Calu3 (cell line): ENCODE measurements at regions of chr12 and their contacts with region 1.

Region 1: DNA sequence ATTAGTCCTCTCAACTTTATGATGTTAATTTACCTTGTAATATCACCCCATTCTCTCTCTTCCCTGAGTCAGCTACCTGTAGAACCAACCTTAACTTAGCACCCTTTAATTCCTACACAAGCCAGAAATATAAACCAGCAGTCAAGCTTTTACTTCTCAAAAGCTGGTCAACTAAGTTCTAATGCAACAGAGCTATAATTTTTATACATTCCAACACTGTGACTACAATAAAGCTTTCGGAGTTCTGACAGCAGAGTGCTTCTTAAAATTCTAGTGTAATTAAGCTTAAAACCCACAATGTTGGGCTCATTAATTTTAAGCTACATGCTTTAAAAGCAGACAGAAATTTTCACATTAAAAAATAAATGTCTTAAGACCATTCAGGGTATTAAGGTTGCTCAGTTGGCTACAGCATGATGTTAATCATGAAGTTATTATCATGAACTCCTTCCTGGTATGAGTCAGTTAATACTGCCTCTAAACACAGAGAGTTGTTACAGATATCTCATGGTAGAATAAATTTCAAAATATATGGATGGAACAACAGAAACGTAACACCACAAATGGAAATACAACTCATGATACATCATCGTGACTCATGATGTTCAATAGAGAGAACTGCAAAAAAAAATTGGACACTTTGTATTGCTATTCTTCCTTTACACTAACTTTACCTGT is 126.7 kb downstream of the EPS8 start:
- DNase-seq: no peak
- H3K4me3 Mint-ChIP-seq: peak overlapping the region; percentile 47
- H3K27ac Mint-ChIP-seq: peak overlapping the region; percentile 99
- H3K4me1 Mint-ChIP-seq: peaks cover 17% of the 10 kb centered on the region
- H3K27me3 Mint-ChIP-seq: no peaks in the 10 kb centered on the region
- CTCF ChIP-seq: no peak

Region 2: DNA sequence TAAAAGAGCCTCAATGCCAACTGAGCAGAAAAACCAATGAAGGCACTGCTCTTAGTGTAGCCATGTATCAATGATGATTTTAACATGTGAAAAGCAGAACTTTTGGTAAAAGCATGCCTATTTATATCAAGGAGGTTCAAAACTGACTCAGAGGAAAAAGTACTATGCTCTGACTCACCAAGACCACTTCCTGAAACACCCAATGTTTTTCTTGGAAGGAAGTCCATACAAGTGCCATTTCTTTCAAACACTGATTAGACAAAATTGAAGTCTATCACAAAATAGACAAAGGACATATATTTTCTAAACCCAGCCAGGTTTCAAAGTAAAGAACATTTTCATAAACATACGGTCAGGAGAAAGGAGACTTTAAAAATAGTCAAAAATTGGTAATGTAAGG is 38.2 kb after region 1 on chr12:
- CTCF ChIA-PET with region 1: interaction called, 5 read pairs
- intact Hi-C with region 1: loop called (anchors 5 kb)
- DNase-seq: peak; percentile 23
- H3K4me3 Mint-ChIP-seq: no peak overlapping the region
- H3K27ac Mint-ChIP-seq: peak overlapping the region; percentile 87
- H3K4me1 Mint-ChIP-seq: peaks cover 82% of the 10 kb centered on the region
- H3K27me3 Mint-ChIP-seq: no peaks in the 10 kb centered on the region
- CTCF ChIP-seq: no peak

Region 3: DNA sequence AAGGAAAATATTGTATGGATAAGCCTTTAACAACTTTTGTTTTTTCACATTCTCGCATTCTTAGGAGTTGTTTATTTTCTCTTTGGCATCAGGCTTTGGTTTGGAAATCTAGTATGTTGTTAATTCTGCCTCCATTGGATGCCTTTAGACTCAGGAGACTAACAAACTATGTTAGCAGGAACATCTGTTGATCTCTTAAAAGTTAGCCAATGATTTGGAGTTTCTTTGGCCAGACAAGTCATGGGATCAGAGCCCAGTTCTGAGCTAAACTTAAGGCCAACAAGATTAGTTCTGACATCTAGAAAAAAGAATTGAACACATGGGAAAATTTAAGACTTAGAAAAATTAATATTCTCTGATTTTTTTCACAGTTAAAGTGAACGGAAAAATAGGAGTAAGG is 184.4 kb after region 1 on chr12:
- CTCF ChIA-PET with region 1: no interaction called
- intact Hi-C with region 1: no loop called
- DNase-seq: no peak
- H3K4me3 Mint-ChIP-seq: no peak overlapping the region
- H3K27ac Mint-ChIP-seq: no peak overlapping the region
- H3K4me1 Mint-ChIP-seq: peaks cover 11% of the 10 kb centered on the region
- H3K27me3 Mint-ChIP-seq: no peaks in the 10 kb centered on the region
- CTCF ChIP-seq: no peak